ENCODE measurements at regions of chr22 and their contacts with region 1.

Region 1: DNA sequence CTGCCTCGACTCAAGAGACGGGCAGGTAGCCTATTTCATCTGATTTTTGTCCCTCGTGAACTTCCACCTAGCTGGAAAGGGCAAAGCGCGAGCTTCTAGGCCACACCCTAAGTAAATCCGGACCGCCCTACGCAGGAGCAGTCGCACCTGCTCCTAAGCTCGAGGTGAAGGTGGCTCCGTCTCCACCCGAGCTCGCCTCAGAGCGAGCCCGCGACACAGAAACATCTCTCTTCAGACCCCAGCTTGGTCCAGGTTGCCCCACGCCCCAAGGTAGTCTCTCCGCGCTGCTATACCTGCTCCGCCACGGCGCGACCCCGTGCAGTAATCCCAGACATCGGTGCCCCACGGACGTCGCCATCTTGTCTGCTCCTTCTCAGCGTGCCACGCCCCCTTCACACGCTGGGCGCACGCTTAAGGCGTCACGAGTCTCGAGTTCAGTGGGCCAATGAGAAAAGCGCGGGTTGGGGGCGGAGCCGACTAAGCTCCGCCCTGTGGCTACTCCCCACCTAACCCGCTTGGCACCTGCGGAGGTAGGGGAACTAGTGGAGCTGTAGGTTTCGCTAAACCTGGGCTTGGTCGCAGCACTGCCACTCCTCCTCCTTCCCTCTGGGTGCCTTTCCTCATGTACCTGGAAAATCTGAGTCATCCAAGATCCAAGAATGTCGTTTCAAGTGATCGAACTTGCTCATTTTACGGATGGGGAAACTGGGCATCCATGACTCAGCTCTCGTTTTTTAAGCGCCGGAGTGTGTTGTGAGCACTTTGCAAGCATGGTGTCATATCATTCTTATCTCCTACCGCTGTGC is at the start of gene PISD:
- DNase-seq: peak; percentile 92 to 99 (median 96)
- ATAC-seq: peak; percentile 90
- H3K4me3 ChIP-seq: peak within 1 kb of the TSS; percentile 95
- H3K4me3 Mint-ChIP-seq: peak within 1 kb of the TSS; percentile 99
- H3K27ac ChIP-seq: peak within 1 kb of the TSS; percentile 62 to 70
- H3K27ac Mint-ChIP-seq: peak within 1 kb of the TSS; percentile 98
- H3K4me1 ChIP-seq: peaks cover 29% of the 10 kb centered on the region
- H3K4me1 Mint-ChIP-seq: peaks cover 38% of the 10 kb centered on the region
- H3K27me3 ChIP-seq: no peaks in the 10 kb centered on the region
- H3K27me3 Mint-ChIP-seq: no peaks in the 10 kb centered on the region
- CTCF ChIP-seq: no peak
- total RNA-seq, gene PISD: 23.4 to 25.3 TPM

Region 2: DNA sequence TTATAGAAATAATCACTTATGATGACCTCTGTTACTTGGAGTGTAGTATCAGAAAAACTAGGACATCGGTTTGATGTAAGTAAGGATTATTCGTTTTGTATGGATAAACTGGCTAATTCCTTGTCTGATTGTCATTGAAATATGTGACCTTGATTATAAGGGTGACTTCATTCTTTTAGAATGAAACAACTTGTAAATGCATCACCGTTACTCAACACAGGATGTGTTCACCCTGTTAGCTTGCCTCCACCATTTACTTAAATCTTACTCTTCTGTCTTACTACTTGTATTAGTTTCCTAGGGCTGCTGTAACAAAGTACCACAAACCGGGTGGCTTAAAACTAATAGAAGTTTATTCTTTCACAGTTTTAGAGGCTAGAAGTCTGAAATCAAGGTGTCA is 157.8 kb before region 1 on chr22:
- CTCF ChIA-PET with region 1: no interaction called
- POLR2A ChIA-PET with region 1: no interaction called
- intact Hi-C with region 1: no loop called
- DNase-seq: no peak
- ATAC-seq: no peak
- H3K4me3 ChIP-seq: no peak overlapping the region
- H3K4me3 Mint-ChIP-seq: no peak overlapping the region
- H3K27ac ChIP-seq: no peak overlapping the region
- H3K27ac Mint-ChIP-seq: no peak overlapping the region
- H3K4me1 ChIP-seq: peaks cover 43% of the 10 kb centered on the region
- H3K4me1 Mint-ChIP-seq: peaks cover 70% of the 10 kb centered on the region
- H3K27me3 ChIP-seq: no peaks in the 10 kb centered on the region
- H3K27me3 Mint-ChIP-seq: no peaks in the 10 kb centered on the region
- CTCF ChIP-seq: no peak

Region 3: DNA sequence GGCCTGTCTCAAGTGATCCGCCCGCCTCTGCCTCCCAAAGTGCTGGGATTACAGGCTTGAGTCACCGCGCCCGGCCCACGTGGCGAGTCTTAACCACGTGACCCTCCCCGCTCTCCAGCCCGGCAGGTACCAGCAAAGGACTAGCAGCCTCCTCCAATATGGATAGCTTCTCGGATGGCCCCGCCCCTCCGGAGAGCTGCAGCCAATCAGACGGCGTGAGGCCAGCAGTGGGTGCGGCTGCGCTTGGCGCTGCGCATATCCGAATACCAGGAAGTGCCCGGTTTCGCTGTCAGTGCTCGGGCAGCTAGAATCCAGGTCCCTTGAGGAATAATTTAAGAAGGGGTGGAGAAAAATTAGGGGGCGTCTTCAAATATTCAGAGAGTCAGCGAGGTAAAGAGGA is 14.6 kb after region 1 on chr22:
- CTCF ChIA-PET with region 1: interaction called, 16 read pairs
- POLR2A ChIA-PET with region 1: interaction called, 75 read pairs
- intact Hi-C with region 1: loop called (anchors 1 kb)
- DNase-seq: peak; percentile 85 to 96 (median 90)
- ATAC-seq: peak; percentile 100
- H3K4me3 ChIP-seq: peak overlapping the region; percentile 69
- H3K4me3 Mint-ChIP-seq: peak overlapping the region; percentile 94
- H3K27ac ChIP-seq: peak overlapping the region in 1 of 2 donors; percentile 77
- H3K27ac Mint-ChIP-seq: peak overlapping the region; percentile 90
- H3K4me1 ChIP-seq: peaks cover 11% of the 10 kb centered on the region
- H3K4me1 Mint-ChIP-seq: peaks cover 10% of the 10 kb centered on the region
- H3K27me3 ChIP-seq: no peaks in the 10 kb centered on the region
- H3K27me3 Mint-ChIP-seq: no peaks in the 10 kb centered on the region
- CTCF ChIP-seq: no peak

Region 4: GRCh38 chr22:31872209-31872608 is 210.2 kb after region 1 on chr22:
- CTCF ChIA-PET with region 1: no interaction called
- POLR2A ChIA-PET with region 1: no interaction called
- intact Hi-C with region 1: no loop called
- DNase-seq: peak in 7 of 14 experiments; percentile 1 to 40 (median 23)
- ATAC-seq: no peak
- H3K4me3 ChIP-seq: no peak overlapping the region
- H3K4me3 Mint-ChIP-seq: no peak overlapping the region
- H3K27ac ChIP-seq: no peak overlapping the region
- H3K27ac Mint-ChIP-seq: no peak overlapping the region
- H3K4me1 ChIP-seq: no peaks in the 10 kb centered on the region
- H3K4me1 Mint-ChIP-seq: no peaks in the 10 kb centered on the region
- H3K27me3 ChIP-seq: no peaks in the 10 kb centered on the region
- H3K27me3 Mint-ChIP-seq: no peaks in the 10 kb centered on the region
- CTCF ChIP-seq: no peak

Region 5: DNA sequence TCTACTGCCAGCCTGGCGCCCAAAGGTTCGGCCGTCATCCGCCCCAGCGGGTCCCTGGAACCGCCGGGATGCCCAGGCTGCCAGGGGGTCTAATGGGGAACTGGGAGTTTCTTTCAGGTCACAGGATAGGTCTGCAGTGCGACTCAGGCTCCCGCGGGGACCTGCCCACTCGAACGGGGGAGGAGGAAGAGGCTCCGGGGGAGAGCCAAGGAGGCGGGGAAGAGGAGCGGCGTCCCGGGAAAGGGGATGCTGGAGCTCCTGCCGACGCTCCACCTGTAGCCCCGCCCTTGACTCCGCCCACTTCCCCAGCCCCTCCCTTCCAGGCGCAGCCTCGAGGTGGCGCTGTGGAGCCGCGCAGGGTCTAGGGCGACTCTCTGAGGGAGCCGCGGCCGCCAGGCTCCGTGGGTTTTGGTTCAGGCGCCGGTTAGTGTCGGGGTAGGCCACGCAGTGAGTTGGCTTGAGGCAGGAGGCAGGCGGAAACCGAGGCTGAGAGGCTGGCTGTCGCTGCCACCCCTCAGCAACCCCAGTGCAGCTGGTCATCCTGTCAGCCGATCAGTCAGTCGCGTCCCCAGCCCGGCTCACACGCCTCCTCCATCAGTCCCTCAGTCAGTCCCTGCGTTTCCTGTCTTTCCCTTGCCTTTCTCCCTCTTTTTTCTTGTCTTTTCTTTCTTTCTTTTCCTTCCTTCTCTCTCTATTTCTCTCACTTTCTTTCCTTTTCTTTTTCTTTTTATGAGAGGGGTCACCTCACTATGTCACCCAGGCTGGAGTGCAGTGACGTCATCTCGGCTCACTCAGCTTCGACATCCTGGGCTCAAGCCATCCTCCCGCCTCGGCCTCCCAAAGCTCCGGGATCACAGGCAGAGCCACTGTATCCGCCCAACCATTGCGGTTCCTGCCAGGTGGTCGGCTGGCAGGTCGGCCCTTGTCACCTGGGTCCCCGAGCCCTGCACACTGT is 308.7 kb after region 1 on chr22:
- CTCF ChIA-PET with region 1: interaction called, 4 read pairs
- POLR2A ChIA-PET with region 1: interaction called, 6 read pairs
- intact Hi-C with region 1: loop called (anchors 1 to 5 kb)
- DNase-seq: peak; percentile 77 to 93 (median 87)
- ATAC-seq: peak; percentile 93
- H3K4me3 ChIP-seq: peak overlapping the region; percentile 56
- H3K4me3 Mint-ChIP-seq: peak overlapping the region; percentile 82
- H3K27ac ChIP-seq: no peak overlapping the region
- H3K27ac Mint-ChIP-seq: peak overlapping the region; percentile 3
- H3K4me1 ChIP-seq: peaks cover 20% of the 10 kb centered on the region
- H3K4me1 Mint-ChIP-seq: peaks cover 13% of the 10 kb centered on the region
- H3K27me3 ChIP-seq: no peaks in the 10 kb centered on the region
- H3K27me3 Mint-ChIP-seq: no peaks in the 10 kb centered on the region
- CTCF ChIP-seq: peak; percentile 90

Region 6: DNA sequence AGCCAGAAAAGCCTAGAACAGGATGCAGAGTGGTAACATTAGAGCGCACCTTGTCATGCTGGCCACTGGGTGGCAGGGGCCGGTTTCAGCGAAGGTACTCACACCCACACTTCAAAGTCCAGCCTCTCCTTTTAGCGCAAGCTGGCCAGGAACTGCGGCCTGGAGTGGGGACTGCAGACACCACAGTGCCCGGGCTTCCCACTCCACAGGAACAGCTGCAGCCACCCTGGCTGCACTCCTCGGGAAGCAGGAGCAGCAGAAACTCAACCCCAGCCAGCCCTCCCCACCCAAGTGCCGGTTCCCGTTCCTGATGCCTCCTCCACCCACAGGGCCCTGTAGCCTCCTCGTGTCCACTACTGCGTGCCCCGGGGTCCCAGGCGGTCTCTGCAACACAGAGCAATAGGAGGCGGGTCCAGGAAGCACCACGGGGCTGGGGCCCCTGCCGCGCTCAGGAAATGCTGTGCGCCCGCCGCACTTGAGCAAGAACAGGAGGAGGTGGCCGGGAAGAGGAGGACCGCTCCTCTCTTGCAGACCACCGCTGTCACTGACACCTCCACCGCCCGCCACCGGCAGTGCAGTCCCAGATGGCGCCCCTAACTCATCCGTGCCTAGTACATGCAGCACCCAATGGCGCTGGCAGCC is 540.6 kb after region 1 on chr22:
- CTCF ChIA-PET with region 1: no interaction called
- POLR2A ChIA-PET with region 1: no interaction called
- intact Hi-C with region 1: loop called in 1 of 2 experiments (anchors 5 kb)
- DNase-seq: peak in 6 of 14 experiments; percentile 16 to 64 (median 45)
- ATAC-seq: no peak
- H3K4me3 ChIP-seq: peak overlapping the region; percentile 58
- H3K4me3 Mint-ChIP-seq: peak overlapping the region; percentile 89
- H3K27ac ChIP-seq: no peak overlapping the region
- H3K27ac Mint-ChIP-seq: peak overlapping the region; percentile 52
- H3K4me1 ChIP-seq: peaks cover 70% of the 10 kb centered on the region
- H3K4me1 Mint-ChIP-seq: peaks cover 54% of the 10 kb centered on the region
- H3K27me3 ChIP-seq: peaks cover 9% of the 10 kb centered on the region in 2 experiments
- H3K27me3 Mint-ChIP-seq: peaks cover 31% of the 10 kb centered on the region
- CTCF ChIP-seq: peak; percentile 35

Measured in CD4-positive, alpha-beta T cell (primary cell).